ENCODE measurements at regions of chr18 and their contacts with region 1.

Region 1: DNA sequence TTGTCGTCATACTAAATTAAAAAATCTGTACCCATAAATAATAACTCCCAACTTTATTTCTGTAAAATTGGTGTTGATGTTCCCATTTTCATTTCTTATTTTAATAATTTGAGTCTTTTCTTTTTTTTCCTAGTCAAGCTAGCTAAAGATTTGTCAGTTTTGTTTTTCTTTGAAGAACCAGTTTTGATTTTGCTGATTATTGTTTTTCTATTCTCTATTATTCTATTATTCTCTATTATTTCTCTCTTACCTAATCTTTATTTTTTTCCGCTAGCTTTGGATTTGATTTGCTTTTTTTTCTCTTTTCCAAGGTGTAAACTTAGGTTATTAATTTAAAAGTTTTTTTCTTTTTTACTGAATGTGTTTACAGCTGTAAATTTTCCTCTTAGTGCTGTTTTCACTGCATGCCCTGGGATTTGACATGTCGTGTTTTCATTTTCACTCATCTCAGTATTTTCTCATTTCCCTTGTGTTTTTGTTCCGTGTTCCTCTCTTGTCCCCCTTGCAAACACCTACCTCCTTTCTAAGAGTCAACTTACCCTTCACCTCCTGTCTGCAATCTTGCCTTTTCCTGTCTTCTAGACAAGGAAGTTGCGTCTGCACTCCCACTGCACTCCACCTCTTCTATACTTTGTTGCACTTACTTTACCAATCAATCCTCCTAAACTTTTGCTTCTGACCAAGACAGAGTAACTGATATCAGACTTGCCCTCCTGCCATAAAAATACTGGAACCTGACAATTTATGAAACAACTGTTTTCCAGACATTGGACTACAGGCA is 18.8 kb downstream of the PSMG2 start:
- DNase-seq: no peak
- H3K4me3 Mint-ChIP-seq: no peak overlapping the region
- H3K27ac Mint-ChIP-seq: peak overlapping the region; percentile 43
- H3K4me1 Mint-ChIP-seq: peaks cover 21% of the 10 kb centered on the region
- H3K27me3 Mint-ChIP-seq: no peaks in the 10 kb centered on the region

Region 2: DNA sequence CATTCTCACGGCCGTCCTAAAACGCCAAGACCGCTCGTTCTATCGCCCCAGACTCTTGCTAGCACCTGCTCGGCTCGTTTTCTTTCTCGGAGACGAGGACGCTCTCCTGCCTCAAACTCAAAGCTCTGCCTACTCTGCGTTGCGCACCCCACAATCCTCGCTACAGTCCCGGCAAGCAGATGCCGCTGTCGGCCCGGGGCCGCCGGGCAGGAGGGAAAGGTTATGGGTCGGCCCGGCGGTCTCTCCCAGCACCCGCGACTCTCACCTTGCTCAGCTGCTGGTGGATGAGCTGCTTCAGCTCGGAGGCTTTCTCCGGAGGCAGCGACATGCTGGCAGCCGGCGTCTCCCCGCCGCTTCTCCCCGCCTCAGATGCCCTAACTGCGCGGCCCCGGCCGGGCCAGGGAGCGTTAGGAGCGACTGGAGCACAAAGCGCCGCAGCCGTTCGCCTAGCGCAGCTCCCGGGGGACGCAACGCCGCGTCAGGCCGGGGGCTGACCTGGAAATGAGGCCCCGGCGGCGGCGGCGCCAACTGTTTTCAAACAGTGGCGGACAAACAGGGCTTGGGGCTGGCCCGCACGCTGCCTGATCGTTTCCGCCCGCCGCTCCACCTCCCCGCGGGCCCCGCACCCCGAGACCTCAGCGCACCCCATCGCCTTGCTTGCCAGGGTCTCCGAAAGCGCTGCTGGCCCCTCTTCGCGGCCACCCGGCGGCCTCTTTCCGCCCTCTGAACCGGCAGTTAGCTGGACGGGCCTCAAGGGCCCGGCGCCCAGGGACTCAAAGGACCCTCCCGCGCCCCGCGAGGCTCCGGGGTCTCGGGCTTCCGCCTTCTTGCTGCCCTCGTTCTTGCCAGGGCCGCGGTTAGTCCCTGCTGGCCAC is 19.2 kb before region 1 on chr18 and contains the starts of genes CEP76 and PSMG2:
- intact Hi-C with region 1: loop called (anchors 2 kb)
- DNase-seq: peak; percentile 80
- H3K4me3 Mint-ChIP-seq: peak within 1 kb of the TSS; percentile 97
- H3K27ac Mint-ChIP-seq: peak within 1 kb of the TSS; percentile 92
- H3K4me1 Mint-ChIP-seq: peaks cover 54% of the 10 kb centered on the region
- H3K27me3 Mint-ChIP-seq: no peaks in the 10 kb centered on the region
- total RNA-seq, gene CEP76: 16.1 and 17.5 TPM in 2 replicates
- total RNA-seq, gene PSMG2: 113 and 118 TPM in 2 replicates